ENCODE measurements at regions of chr12 and their contacts with region 1.

Region 1: GRCh38 chr12:50111693-50112455 is at the start of gene COX14:
- DNase-seq: peak; percentile 100
- H3K4me3 ChIP-seq: peak within 1 kb of the TSS; percentile 70 to 99 (median 86)
- H3K27ac ChIP-seq: peak within 1 kb of the TSS; percentile 95 to 99 (median 98)
- H3K4me1 ChIP-seq: peaks cover 0 to 44% (median 33%) of the 10 kb centered on the region in 4 donors
- H3K27me3 ChIP-seq: no peaks in the 10 kb centered on the region
- CTCF ChIP-seq: peak in 2 of 4 experiments; percentile 86 to 89
- EP300 ChIP-seq: peak in 1 of 4 donors; percentile 64
- POLR2A ChIP-seq: peak; percentile 96 to 99
- total RNA-seq, gene COX14: 87.8 to 179 (median 93.8) TPM

Region 2: GRCh38 chr12:50084775-50085614 is 26.9 kb before region 1 on chr12 and contains the start of gene SMARCD1:
- intact Hi-C with region 1: loop called (anchors 2 kb)
- DNase-seq: peak; percentile 96
- H3K4me3 ChIP-seq: peak within 1 kb of the TSS; percentile 80 to 99 (median 90)
- H3K27ac ChIP-seq: peak within 1 kb of the TSS; percentile 96 to 99 (median 98)
- H3K4me1 ChIP-seq: peaks cover 0 to 24% (median 11%) of the 10 kb centered on the region in 4 donors
- H3K27me3 ChIP-seq: no peaks in the 10 kb centered on the region
- CTCF ChIP-seq: peak in 1 of 4 experiments; percentile 22
- EP300 ChIP-seq: no peak
- POLR2A ChIP-seq: no peak
- total RNA-seq, gene SMARCD1: 22.4 to 64.8 (median 39.2) TPM

Region 3: DNA sequence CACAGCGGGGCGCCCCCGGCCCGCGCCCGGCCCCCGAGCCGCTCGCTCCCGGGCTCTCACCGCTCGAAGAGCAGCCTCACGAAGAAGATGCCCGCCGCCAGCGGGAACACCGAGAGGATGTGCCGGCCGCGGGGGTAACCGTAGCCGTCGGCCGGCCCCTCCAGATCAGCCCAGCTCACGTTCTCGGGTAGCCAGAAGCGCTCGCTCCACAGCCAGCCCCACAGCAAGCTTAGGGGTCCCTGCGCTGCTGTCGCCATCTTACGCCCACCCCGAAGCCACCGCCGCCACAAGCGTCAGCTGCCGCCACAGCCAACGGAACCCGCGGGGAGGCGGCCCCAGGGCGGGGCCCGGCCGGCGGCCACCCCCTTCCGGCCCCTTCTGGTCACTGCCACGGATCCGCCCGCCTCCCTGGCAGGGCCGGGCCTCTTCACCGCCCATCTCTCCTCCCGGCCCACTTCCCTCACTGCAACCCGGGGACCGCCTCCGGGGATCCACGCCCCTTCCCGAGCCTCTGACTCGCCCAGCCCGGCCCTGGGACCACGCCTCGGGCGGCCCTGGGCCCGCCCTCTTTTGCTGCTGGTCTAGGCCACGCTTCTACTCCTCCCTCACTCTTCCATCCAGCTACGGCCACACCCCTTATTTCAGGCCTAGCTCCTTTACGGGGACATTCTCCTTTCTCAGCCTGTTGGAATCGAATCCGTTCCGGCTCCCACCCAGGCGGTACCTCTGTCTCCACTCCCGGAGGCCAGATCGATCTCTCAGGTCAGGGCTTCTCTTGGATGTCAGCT is 55.4 kb after region 1 on chr12 and contains the start of gene CERS5:
- intact Hi-C with region 1: loop called (anchors 1 kb)
- DNase-seq: peak; percentile 99
- H3K4me3 ChIP-seq: peak within 1 kb of the TSS; percentile 93 to 99 (median 96)
- H3K27ac ChIP-seq: peak within 1 kb of the TSS; percentile 95 to 99 (median 97)
- H3K4me1 ChIP-seq: peaks cover 0 to 19% (median 17%) of the 10 kb centered on the region in 4 donors
- H3K27me3 ChIP-seq: no peaks in the 10 kb centered on the region
- CTCF ChIP-seq: peak in 2 of 4 experiments; percentile 9 to 21
- EP300 ChIP-seq: no peak
- POLR2A ChIP-seq: peak; percentile 35 to 62
- total RNA-seq, gene CERS5: 21.7 to 29.1 (median 23.3) TPM

Region 4: GRCh38 chr12:50174971-50175715 is 63.3 kb after region 1 on chr12:
- intact Hi-C with region 1: loop called (anchors 2 kb)
- DNase-seq: no peak
- H3K4me3 ChIP-seq: no peak overlapping the region
- H3K27ac ChIP-seq: peak overlapping the region in 2 of 4 donors; percentile 1 to 32
- H3K4me1 ChIP-seq: no peaks in the 10 kb centered on the region
- H3K27me3 ChIP-seq: no peaks in the 10 kb centered on the region
- CTCF ChIP-seq: peak; percentile 45 to 70 (median 62)
- EP300 ChIP-seq: no peak
- POLR2A ChIP-seq: no peak

Measured in sigmoid colon (tissue), 7 donors.